ENCODE measurements at regions of chr7 and their contacts with region 1.

Region 1: GRCh38 chr7:102286237-102287110 is at the start of gene SH2B2:
- DNase-seq: peak; percentile 60 to 63
- H3K4me3 ChIP-seq: peak within 1 kb of the TSS; percentile 88
- H3K27ac ChIP-seq: 0 out of 2 replicates have a peak within 1 kb of the TSS, but pooled peaks have one; percentile 33
- H3K4me1 ChIP-seq: 0 out of 2 replicates have a peak, but pooled peaks cover 5% of the 10 kb centered on the region
- H3K27me3 ChIP-seq: no peaks in the 10 kb centered on the region
- CTCF ChIP-seq: no peak
- total RNA-seq, gene SH2B2: 12.1 and 18.4 TPM in 2 replicates

Region 2: DNA sequence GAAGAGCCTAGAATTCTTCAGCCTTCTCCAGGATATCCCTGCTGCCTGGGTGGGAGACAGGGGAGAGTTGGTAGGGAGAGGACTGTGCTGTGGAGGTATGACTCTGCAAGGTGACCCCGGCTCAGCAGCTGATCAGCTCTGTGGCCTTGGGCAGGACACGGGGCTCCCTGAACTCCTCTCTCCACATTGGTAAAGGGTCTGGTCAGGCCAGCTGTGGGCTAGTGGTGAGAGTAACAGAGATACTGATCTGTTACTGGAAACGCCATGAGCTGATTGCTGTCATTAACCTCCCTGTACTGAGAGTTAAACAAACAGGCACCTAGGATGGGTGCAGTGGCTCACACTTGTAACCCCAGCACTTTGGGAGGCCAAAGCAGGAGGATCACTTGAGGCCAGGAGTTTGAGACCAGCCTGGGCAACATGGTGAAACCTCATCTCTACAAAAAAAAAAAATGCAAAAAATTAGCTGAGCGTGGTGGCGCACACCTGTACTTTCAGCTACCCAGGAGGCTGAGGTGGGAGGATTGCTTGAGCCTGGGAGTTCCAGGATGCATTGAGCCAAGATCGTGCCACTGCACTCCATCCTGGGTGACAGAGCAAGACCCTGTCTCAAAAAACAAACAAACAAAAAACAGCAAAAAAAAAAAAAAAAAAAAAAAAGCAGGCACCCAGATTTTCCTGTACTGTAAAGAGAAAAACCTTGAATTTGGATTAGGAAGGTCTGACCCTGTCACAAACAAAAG is 317.6 kb before region 1 on chr7:
- CTCF ChIA-PET with region 1: interaction called, 11 read pairs
- POLR2A ChIA-PET with region 1: no interaction called
- intact Hi-C with region 1: no loop called
- DNase-seq: no peak
- H3K4me3 ChIP-seq: no peak overlapping the region
- H3K27ac ChIP-seq: no peak overlapping the region
- H3K4me1 ChIP-seq: no peaks in the 10 kb centered on the region
- H3K27me3 ChIP-seq: no peaks in the 10 kb centered on the region
- CTCF ChIP-seq: no peak

Region 3: DNA sequence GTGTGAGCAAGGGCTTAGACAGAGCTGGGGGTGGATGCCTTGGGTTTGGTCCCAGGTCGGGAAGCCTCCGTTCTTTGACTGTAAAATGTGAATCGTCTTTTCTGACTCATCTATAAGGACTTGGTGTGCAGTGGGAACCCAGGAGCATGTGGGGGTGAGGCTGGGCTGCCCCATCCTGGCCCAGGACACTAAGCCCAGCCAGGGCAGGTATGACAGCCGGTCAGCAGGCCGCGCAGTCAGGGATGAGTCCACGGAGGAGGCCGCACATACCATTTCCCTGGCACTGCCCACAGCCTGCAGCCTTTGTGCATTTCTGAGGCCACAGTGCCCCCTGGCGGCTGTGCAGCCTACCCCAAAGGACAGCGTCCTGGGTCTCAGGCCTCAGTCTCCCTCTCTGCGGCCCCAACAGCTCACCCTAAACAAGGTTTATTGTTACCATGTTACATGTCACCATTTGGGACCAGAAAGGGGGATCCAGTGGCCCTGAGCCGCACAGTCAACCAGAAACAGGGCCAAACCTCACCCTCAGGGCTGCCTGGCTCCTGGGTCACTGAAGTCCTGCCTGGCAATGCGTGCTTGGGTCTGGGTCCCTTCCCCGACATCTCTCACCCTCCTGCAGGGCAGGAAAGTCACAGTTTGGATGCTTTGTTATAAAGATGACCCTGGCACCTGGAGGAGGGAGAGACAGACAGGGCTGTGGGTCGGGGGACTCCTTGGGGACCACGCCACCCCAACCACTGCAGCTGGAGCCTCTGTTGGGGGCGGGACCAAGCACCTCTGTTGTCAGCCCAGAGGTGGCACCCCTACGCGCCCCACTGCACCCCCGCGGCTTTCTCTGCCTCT is 14.2 kb before region 1 on chr7:
- CTCF ChIA-PET with region 1: no interaction called
- POLR2A ChIA-PET with region 1: no interaction called
- intact Hi-C with region 1: no loop called
- DNase-seq: peak in 1 of 2 experiments; percentile 86
- H3K4me3 ChIP-seq: no peak overlapping the region
- H3K27ac ChIP-seq: no peak overlapping the region
- H3K4me1 ChIP-seq: no peaks in the 10 kb centered on the region
- H3K27me3 ChIP-seq: no peaks in the 10 kb centered on the region
- CTCF ChIP-seq: peak; percentile 86

Region 4: GRCh38 chr7:102313997-102314780 is 27.7 kb after region 1 on chr7:
- CTCF ChIA-PET with region 1: no interaction called
- POLR2A ChIA-PET with region 1: no interaction called
- intact Hi-C with region 1: loop called (anchors 2 kb)
- DNase-seq: no peak
- H3K4me3 ChIP-seq: no peak overlapping the region
- H3K27ac ChIP-seq: no peak overlapping the region
- H3K4me1 ChIP-seq: peaks cover 9% of the 10 kb centered on the region
- H3K27me3 ChIP-seq: no peaks in the 10 kb centered on the region
- CTCF ChIP-seq: no peak